HEK293 (cell line): ENCODE measurements at regions of chr11 and their contacts with region 1.

Region 1: GRCh38 chr11:67195971-67196456 is 70.3 kb upstream of the GRK2 start:
- H3K4me3 ChIP-seq: no peak overlapping the region
- H3K27ac ChIP-seq: no peak overlapping the region
- H3K4me1 ChIP-seq: peaks cover 5% of the 10 kb centered on the region; the same call in 1 of the 2 replicates
- CTCF ChIP-seq: no peak

Region 2: GRCh38 chr11:67167086-67167485 is 28.9 kb before region 1 on chr11:
- CTCF ChIA-PET with region 1: interaction called, 11 read pairs
- POLR2A ChIA-PET with region 1: no interaction called
- H3K4me3 ChIP-seq: no peak overlapping the region
- H3K27ac ChIP-seq: no peak overlapping the region
- H3K4me1 ChIP-seq: no peaks in the 10 kb centered on the region
- CTCF ChIP-seq: no peak